Right lobe of liver (tissue), 6 donors: ENCODE measurements at regions of chr6 and their contacts with region 1.

Region 1: DNA sequence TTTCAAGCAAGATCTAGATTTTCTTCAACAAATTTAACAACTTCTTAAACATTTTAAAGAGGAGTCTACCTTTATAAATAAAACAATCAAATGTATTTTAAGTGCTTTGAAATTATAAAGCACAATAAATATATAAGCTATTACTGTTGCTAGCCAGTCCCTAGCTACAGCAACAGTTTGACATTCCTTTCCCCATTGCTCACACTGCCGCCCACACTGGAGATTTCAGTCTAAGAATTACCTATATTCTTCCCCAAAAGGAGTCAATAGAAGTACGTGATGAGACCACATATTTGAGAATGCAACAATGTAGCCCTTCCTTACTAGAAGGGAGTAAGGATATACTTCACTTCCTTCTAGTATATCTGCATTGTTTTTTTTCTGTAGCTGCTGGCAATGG is 65.3 kb upstream of the RNF146 start:
- DNase-seq: no peak
- ATAC-seq: no peak
- H3K4me3 ChIP-seq: no peak overlapping the region
- H3K27ac ChIP-seq: no peak overlapping the region
- H3K4me1 ChIP-seq: no peaks in the 10 kb centered on the region
- H3K27me3 ChIP-seq: no peaks in the 10 kb centered on the region
- CTCF ChIP-seq: no peak
- POLR2A ChIP-seq: no peak

Region 2: DNA sequence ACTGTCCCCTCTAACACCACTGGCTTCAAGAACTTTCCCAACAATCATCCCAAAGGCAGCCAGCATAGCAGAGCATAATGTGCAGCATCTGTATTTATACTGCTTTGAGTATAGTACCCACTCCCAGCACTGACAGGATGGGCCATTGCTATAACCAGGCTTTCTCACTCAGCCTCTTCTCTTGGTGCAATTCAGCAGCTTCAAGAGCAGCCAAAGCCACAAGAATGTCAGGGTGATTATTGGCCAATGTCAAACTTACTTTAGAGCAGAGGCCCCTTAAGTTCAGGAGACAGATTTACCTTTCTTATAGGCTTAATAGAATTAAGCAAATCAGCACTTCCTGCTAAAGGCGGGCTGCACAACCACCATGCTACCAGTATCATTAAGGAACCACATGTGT is 315.2 kb before region 1 on chr6:
- intact Hi-C with region 1: no loop called
- DNase-seq: no peak
- ATAC-seq: no peak
- H3K4me3 ChIP-seq: no peak overlapping the region
- H3K27ac ChIP-seq: no peak overlapping the region
- H3K4me1 ChIP-seq: no peaks in the 10 kb centered on the region
- H3K27me3 ChIP-seq: no peaks in the 10 kb centered on the region
- CTCF ChIP-seq: no peak
- POLR2A ChIP-seq: no peak

Region 3: GRCh38 chr6:126919947-126920346 is 281.4 kb before region 1 on chr6:
- intact Hi-C with region 1: loop called in 1 of 2 experiments (anchors 10 kb)
- DNase-seq: no peak
- ATAC-seq: no peak
- H3K4me3 ChIP-seq: no peak overlapping the region
- H3K27ac ChIP-seq: no peak overlapping the region
- H3K4me1 ChIP-seq: no peaks in the 10 kb centered on the region
- H3K27me3 ChIP-seq: no peaks in the 10 kb centered on the region
- CTCF ChIP-seq: no peak
- POLR2A ChIP-seq: no peak

Region 4: DNA sequence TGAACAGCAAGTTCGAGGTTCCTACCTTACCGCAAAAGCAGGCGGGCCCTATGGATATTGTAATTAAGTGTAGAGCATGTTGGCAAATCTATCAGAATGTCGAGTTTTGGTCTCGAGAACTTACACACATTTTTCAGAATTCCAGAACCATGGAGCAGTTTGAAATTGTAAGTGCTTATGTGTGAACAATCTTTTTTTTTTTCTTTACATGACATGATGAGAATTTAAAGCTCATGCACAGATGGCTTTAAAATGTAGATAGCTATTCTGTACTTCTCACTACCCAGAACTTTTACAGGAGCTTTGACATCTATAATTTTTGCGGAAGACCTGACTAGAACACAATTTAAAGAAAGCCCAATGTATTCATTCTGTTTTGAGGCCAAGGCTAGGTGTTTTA is 200.7 kb before region 1 on chr6:
- intact Hi-C with region 1: no loop called
- DNase-seq: no peak
- ATAC-seq: no peak
- H3K4me3 ChIP-seq: no peak overlapping the region
- H3K27ac ChIP-seq: no peak overlapping the region
- H3K4me1 ChIP-seq: no peaks in the 10 kb centered on the region
- H3K27me3 ChIP-seq: no peaks in the 10 kb centered on the region
- CTCF ChIP-seq: no peak
- POLR2A ChIP-seq: no peak

Region 5: DNA sequence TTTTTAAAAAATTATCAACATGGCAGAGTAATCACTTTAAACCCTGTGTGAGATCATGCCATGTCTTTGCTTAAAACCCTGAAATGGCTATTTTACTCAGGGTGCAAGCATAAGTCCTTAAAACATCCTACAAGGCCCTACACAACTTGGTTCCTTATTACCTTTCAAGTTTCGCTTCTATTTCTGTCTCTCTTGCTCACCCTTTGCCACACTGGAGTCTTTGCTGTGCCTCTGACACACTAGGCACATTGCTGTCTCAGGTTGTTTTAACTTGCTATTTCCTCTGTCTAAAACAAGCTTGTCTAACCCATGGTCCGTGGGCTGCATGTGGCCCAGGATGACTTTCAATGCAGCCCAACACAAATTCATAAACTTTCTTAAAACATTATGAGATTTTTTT is 202.3 kb after region 1 on chr6:
- intact Hi-C with region 1: no loop called
- DNase-seq: no peak
- ATAC-seq: no peak
- H3K4me3 ChIP-seq: no peak overlapping the region
- H3K27ac ChIP-seq: no peak overlapping the region
- H3K4me1 ChIP-seq: no peaks in the 10 kb centered on the region
- H3K27me3 ChIP-seq: no peaks in the 10 kb centered on the region
- CTCF ChIP-seq: no peak
- POLR2A ChIP-seq: no peak